ENCODE measurements at regions of chr10 and their contacts with region 1.

Region 1: GRCh38 chr10:89563861-89564478 is 28.6 kb upstream of the SLC16A12 start:
- DNase-seq: no peak
- H3K4me3 Mint-ChIP-seq: no peak overlapping the region
- H3K27ac Mint-ChIP-seq: no peak overlapping the region
- H3K4me1 Mint-ChIP-seq: no peaks in the 10 kb centered on the region
- H3K27me3 Mint-ChIP-seq: peaks cover 6% of the 10 kb centered on the region

Region 2: DNA sequence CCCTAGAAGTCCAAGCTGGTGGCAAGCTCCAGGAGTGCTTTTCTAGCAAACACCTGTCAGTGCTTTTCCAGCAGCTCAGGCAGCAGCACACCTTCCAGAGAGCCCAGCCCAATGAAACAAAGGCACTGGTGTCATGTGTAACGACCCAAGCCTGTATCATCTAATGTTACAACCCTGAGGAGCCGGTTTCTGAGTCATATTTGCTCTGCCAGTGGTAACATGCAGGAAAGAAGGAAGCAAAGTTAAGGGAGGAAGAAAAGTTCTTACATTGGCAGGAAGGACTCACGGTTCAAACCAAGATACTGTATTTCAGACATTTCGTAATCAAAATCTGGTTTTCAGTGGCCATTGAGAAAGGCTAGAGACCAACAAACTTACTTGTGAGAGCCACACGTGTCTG is 712.3 kb before region 1 on chr10 and contains the start of gene ANKRD22:
- CTCF ChIA-PET with region 1: no interaction called
- POLR2A ChIA-PET with region 1: no interaction called
- intact Hi-C with region 1: loop called (anchors 5 kb)
- DNase-seq: no peak
- H3K4me3 Mint-ChIP-seq: no peak within 1 kb of the TSS
- H3K27ac Mint-ChIP-seq: no peak within 1 kb of the TSS
- H3K4me1 Mint-ChIP-seq: peaks cover 20% of the 10 kb centered on the region
- H3K27me3 Mint-ChIP-seq: peaks cover 6% of the 10 kb centered on the region
- total RNA-seq, gene ANKRD22: 0.12 to 0.24 TPM

Region 3: DNA sequence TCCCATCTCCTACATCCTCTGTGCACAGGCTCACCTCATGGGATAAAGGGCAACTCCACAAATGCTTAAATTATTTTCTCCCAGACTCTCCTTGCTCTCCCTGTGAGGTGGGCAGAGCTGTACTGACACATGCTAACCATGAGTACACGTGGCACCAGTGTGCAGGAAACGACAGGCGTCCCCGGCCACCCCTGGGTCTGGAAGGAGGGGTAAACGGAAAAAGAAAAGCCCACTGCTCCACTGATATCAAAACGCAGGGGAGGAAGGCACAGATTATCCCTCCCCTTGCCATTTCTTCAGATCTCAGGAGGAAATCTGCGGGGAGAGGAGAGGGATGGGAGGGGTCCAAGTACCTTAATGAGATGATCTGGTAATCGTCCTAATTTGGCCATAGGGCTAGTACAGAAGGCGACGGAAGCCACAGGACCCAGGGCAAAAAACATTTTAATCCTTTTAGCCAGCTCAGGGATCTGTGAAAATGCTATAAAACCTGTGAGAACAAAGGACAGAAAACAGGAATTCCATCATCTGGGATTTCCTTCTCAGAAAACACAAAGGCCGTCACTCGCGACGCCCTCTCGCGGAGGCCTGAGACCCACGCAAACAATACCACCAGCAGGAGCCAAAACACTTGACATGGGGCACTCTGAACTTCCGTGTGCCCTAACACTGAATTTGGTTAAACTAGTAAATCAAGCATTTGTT is 339.1 kb before region 1 on chr10:
- CTCF ChIA-PET with region 1: no interaction called
- POLR2A ChIA-PET with region 1: no interaction called
- intact Hi-C with region 1: no loop called
- DNase-seq: no peak
- H3K4me3 Mint-ChIP-seq: no peak overlapping the region
- H3K27ac Mint-ChIP-seq: no peak overlapping the region
- H3K4me1 Mint-ChIP-seq: peaks cover 2% of the 10 kb centered on the region
- H3K27me3 Mint-ChIP-seq: no peaks in the 10 kb centered on the region

Region 4: DNA sequence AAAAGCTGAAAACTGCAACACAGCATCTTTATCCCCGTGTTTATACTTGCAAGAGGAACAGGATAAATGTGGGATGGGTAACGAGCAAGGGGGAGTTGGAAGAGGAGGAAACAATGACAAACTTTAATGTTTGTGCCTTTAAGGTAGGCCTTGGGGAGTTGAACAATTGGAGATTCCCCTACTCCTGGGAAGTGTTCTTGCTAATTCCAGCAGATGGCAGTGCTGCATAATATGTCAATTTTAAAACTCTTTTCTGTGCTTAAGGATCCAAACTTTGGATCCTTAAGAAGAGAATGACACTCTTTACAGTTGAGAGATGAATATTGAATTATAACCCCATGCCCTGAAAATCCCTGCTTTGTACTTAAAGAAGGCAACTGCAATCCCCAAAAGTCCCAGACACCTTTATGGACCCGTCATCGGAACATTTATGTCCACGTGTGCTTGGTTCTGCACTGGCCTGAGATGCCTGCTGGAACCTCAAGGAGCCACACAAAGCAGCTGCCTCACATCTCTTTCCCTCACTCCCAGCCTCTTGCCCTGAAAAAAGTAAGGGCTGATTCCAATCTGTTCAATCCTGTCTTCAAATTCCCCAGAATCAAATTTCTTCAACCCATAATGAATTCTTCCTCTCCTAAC is 137.6 kb before region 1 on chr10:
- CTCF ChIA-PET with region 1: interaction called, 7 read pairs
- POLR2A ChIA-PET with region 1: no interaction called
- intact Hi-C with region 1: loop called (anchors 1 kb)
- DNase-seq: no peak
- H3K4me3 Mint-ChIP-seq: no peak overlapping the region
- H3K27ac Mint-ChIP-seq: no peak overlapping the region
- H3K4me1 Mint-ChIP-seq: no peaks in the 10 kb centered on the region
- H3K27me3 Mint-ChIP-seq: peaks cover 1% of the 10 kb centered on the region